ENCODE measurements at regions of chr7 and their contacts with region 1.

Region 1: GRCh38 chr7:2431260-2431867 is 28.0 kb downstream of the CHST12 start:
- DNase-seq: peak in 4 of 5 donors; percentile 33 to 53 (median 42)
- H3K4me3 ChIP-seq: no peak overlapping the region
- H3K4me3 Mint-ChIP-seq: no peak overlapping the region
- H3K27ac ChIP-seq: no peak overlapping the region
- H3K27ac Mint-ChIP-seq: peak overlapping the region in 2 of 7 donors; percentile 27 to 30
- H3K4me1 ChIP-seq: no peaks in the 10 kb centered on the region
- H3K4me1 Mint-ChIP-seq: peaks cover 2 to 23% (median 18%) of the 10 kb centered on the region in 4 donors
- H3K27me3 ChIP-seq: no peaks in the 10 kb centered on the region
- H3K27me3 Mint-ChIP-seq: no peaks in the 10 kb centered on the region

Region 2: DNA sequence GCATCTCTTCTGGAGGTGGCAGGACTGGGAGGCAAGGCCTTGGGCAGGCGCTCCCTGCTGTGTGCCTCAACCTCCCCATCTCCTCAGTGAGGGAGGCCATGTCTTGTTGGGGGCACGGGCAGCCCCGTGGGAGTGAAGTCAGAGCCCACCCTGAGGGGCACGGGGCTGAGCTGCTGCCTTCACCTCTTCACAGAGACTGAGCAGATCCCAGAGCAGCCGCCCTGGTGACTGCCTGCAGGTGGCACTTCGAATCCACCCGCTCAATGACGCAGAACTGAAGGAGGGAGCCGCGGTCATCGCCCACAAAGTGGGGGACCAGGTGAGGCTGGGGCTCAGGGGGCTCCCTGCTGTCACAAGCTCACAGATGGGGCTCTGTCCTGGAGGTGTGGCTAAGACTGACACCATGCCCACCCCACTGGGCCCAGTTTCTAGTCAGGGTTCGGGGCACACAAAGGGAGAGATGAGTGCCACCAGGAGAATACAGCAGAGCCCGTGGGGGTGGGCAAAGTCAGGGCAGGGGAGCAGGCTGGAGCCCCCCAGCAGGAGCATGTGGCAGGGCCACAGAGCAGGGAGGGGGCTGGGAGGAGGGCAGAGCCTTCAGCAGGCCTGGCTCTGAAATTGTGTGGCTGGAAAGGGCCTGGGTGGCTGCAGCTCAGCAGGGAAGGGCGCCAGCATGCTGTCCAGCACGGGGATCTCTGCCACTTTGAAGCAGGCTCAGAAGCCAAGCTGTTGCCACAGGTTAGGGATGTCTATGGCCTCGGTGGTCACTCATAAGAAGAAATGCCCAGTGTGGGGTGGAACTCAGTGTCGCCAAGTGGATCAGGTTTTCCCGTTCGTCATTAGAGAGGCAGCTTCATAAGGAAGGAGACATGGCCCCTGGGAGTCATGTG is 46.8 kb before region 1 on chr7:
- CTCF ChIA-PET with region 1: interaction called, 14 read pairs
- POLR2A ChIA-PET with region 1: no interaction called
- intact Hi-C with region 1: no loop called
- DNase-seq: no peak
- H3K4me3 ChIP-seq: no peak overlapping the region
- H3K4me3 Mint-ChIP-seq: no peak overlapping the region
- H3K27ac ChIP-seq: no peak overlapping the region
- H3K27ac Mint-ChIP-seq: peak overlapping the region in 1 of 7 donors; percentile 42
- H3K4me1 ChIP-seq: no peaks in the 10 kb centered on the region
- H3K4me1 Mint-ChIP-seq: no peaks in the 10 kb centered on the region
- H3K27me3 ChIP-seq: no peaks in the 10 kb centered on the region
- H3K27me3 Mint-ChIP-seq: no peaks in the 10 kb centered on the region

Region 3: DNA sequence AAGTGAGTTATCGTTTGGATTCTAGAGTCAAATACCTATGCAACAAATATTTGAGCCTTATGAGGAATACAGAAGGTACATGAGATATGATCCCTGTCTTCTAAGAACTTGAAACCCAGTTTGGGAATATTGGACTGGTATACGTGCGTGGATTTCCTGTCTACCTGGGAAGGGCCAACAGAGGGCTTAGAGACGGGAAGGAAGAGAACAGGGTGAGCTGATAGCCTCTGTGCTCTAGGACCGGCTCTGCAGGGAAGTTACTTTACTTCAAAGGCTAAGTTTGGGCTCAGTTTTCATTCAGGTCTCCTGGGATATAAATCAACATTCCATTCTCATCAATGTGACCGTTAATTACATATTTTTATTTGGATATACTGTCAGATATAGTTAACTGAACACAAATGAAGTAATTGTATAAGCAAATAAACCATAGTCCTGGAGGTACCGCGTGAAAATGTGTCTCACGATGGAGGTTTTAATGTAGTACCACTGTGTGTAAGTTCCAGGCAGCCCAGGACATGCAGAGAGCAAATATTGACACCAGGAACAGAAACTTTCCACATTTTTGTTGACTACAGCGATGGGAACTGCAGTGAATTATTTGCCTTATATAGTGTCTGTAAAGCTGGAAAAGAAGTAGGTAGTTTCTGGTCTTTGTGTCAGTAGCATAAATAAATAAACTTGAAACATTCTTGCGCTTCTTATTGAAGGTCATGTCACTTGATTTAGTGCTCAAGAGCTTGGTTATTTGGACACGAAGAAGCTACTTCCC is 19.4 kb before region 1 on chr7:
- CTCF ChIA-PET with region 1: interaction called, 24 read pairs
- POLR2A ChIA-PET with region 1: interaction called, 3 read pairs
- intact Hi-C with region 1: no loop called
- DNase-seq: no peak
- H3K4me3 ChIP-seq: no peak overlapping the region
- H3K4me3 Mint-ChIP-seq: peak overlapping the region in 2 of 8 donors; percentile 17 to 19
- H3K27ac ChIP-seq: no peak overlapping the region
- H3K27ac Mint-ChIP-seq: peak overlapping the region; percentile 38 to 87 (median 48)
- H3K4me1 ChIP-seq: peaks cover 62% of the 10 kb centered on the region
- H3K4me1 Mint-ChIP-seq: peaks cover 44 to 82% (median 58%) of the 10 kb centered on the region in 4 donors
- H3K27me3 ChIP-seq: no peaks in the 10 kb centered on the region
- H3K27me3 Mint-ChIP-seq: no peaks in the 10 kb centered on the region

Region 4: GRCh38 chr7:2417981-2418481 is 13.3 kb before region 1 on chr7:
- CTCF ChIA-PET with region 1: interaction called, 24 read pairs
- POLR2A ChIA-PET with region 1: no interaction called
- intact Hi-C with region 1: no loop called
- DNase-seq: peak; percentile 50 to 82 (median 54)
- H3K4me3 ChIP-seq: peak overlapping the region in 1 of 2 donors; percentile 13
- H3K4me3 Mint-ChIP-seq: peak overlapping the region in 7 of 8 donors; percentile 27 to 78 (median 56)
- H3K27ac ChIP-seq: peak overlapping the region; percentile 13
- H3K27ac Mint-ChIP-seq: peak overlapping the region; percentile 65 to 90 (median 85)
- H3K4me1 ChIP-seq: peaks cover 21% of the 10 kb centered on the region
- H3K4me1 Mint-ChIP-seq: peaks cover 25 to 53% (median 33%) of the 10 kb centered on the region in 4 donors
- H3K27me3 ChIP-seq: no peaks in the 10 kb centered on the region
- H3K27me3 Mint-ChIP-seq: no peaks in the 10 kb centered on the region